ENCODE measurements at regions of chr4 and their contacts with region 1.

Region 1: GRCh38 chr4:152039023-152039481 is 278.2 kb upstream of the GATB start:
- DNase-seq: no peak

Region 2: GRCh38 chr4:151667048-151667447 is 372.0 kb before region 1 on chr4:
- intact Hi-C with region 1: loop called (anchors 5 kb)
- DNase-seq: no peak

Region 3: GRCh38 chr4:151690164-151690870 is 348.7 kb before region 1 on chr4:
- intact Hi-C with region 1: loop called (anchors 5 kb)
- DNase-seq: no peak

Region 4: DNA sequence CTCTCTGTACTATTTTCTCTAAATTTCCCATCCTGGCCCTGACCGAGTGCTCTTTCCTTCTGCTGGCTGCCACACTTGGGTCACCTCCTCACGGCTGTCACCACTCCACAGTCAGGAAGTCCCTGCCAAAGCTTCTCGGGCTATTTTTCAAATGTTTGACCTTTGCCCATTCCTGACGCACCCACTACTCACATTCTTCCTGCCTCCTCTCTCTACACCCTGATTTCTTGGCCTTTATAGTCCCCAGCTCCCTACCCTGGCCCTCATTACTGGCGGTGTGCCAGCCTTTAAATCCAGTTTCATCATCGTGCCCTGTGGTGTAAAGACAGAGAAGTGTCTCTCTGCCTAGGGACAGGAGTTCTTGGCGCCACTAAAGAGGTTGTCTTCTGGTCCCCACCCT is 231.8 kb before region 1 on chr4:
- intact Hi-C with region 1: loop called (anchors 1 kb)
- DNase-seq: peak; percentile 80

Region 5: GRCh38 chr4:152374606-152375285 is 335.7 kb after region 1 on chr4:
- intact Hi-C with region 1: loop called (anchors 5 kb)
- DNase-seq: no peak

Measured in cardiac septum (tissue), 1 donor.